ENCODE measurements at regions of chr4 and their contacts with region 1.

Region 1: GRCh38 chr4:24781999-24782745 is 13.2 kb upstream of the SOD3 start:
- DNase-seq: no peak
- H3K4me3 ChIP-seq: peak overlapping the region in 1 of 2 donors; percentile 13
- H3K27ac ChIP-seq: peak overlapping the region; percentile 73 to 82
- H3K4me1 ChIP-seq: peaks cover 0 to 51% (median 24%) of the 10 kb centered on the region in 4 donors
- H3K27me3 ChIP-seq: no peaks in the 10 kb centered on the region
- CTCF ChIP-seq: peak in 1 of 2 experiments; percentile 33

Region 2: DNA sequence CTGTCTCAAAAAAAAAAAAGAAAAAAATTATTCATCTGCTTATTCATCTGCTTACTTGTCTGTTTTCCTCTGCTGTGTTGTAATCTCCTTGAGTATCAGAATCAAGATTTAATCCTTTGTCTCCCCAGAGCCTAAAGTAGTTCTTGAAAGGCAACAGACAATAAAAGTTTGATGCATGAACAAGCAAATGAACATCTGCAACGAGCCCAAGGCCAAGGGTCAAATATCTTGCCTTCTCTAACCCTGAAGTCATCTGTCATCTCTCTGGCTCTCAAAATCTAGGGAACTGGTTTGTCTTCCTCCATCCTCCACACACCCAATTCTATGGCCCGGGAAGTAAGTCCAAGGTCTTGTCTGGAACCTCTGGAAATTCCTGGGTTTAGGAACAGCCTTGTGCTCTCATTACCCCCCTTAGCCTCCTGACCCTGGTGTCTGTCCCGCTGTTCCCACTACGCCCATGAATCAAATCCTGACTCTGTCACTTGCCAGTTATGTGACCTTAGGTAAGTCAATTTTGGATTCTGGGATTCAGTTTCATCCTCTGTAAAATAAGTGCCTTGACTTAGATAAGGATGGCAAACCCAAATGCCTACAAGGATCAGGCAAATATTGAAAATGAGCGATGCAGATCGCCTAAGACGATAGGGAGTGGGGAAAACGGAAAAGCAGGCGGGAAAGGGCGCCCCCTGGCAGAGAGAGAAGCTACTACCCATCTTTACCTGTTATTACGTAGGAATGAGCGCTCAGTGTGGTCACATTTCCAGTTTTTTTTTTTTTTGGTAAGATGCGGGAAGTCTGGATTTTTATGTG is 95.1 kb before region 1 on chr4:
- intact Hi-C with region 1: no loop called
- DNase-seq: no peak
- H3K4me3 ChIP-seq: no peak overlapping the region
- H3K27ac ChIP-seq: no peak overlapping the region
- H3K4me1 ChIP-seq: no peaks in the 10 kb centered on the region
- H3K27me3 ChIP-seq: no peaks in the 10 kb centered on the region
- CTCF ChIP-seq: no peak

Region 3: DNA sequence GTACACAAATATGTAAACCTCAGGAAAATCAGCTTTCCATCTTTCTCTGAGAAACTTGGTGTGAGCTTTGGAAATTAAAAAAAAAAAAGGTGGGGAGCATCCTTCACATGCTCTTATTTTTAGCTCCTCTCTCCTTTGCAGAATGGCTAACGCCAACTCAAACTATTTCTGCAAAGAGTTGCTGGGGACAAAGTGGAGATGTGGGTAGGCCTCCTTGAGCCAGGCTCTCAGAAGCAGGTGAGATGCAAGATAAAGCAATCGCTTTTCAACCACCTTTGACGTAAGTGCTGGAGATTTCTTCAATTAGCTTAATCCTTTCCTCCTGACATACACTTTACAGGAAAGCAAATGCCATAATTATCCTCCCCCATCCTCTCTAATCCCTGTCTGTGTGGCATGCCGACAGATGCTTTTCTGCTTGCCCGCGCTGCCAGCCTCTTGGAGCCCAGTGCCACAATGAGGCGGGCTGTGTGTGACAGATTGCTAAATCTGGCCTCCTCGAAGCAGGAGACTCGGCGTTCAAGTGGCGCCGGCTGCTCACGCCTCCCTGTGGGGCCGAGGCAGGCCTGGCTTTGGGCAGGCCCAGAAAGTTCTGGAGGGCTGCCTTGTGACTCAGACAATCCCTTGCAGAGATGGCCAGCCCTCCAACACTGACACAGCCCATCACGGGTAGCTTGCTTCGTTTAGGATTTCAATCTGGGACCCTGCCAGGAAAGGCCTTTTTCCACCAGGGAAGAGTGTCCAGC is 51.7 kb before region 1 on chr4:
- intact Hi-C with region 1: loop called (anchors 5 kb)
- DNase-seq: peak; percentile 89 to 97
- H3K4me3 ChIP-seq: no peak overlapping the region
- H3K27ac ChIP-seq: peak overlapping the region; percentile 62 to 69
- H3K4me1 ChIP-seq: peaks cover 0 to 70% (median 36%) of the 10 kb centered on the region in 4 donors
- H3K27me3 ChIP-seq: no peaks in the 10 kb centered on the region
- CTCF ChIP-seq: peak in 1 of 2 experiments; percentile 11

Region 4: DNA sequence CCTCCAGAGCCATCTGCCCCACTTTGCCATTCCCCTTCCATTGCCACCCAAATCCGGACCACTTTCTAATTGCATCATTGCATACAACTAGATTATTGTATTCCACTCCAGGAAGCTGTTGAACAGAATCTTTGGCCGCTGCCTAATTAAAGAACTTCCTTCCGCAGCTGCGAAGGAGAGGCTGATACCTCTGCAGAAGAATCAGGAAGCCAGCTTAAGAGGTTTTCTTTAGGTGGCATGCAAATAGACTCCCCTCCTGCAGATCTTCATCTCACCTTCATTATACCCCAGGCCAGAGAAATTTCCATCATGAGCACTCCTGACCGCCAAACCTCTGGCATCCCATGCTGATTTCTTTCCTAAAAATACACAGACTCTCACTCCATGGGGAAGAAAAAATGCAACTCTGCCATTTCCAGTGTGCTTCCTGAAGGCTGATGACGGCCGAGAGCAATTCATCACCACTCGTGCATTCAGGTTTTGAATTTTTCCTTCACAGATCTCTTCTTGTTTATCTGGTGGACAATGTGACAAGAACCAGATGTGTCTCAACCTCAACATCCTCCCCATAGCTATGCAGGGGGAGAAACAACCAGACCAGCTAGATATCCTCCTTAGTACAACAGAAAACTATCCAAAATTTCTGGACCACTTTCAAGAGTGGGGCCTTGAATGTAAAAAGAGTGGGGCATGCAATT is 217.4 kb after region 1 on chr4:
- intact Hi-C with region 1: no loop called
- DNase-seq: no peak
- H3K4me3 ChIP-seq: no peak overlapping the region
- H3K27ac ChIP-seq: no peak overlapping the region
- H3K4me1 ChIP-seq: peaks cover 0 to 21% (median 7%) of the 10 kb centered on the region in 4 donors
- H3K27me3 ChIP-seq: no peaks in the 10 kb centered on the region
- CTCF ChIP-seq: no peak